ENCODE measurements at regions of chr2 and their contacts with region 1.

Region 1: GRCh38 chr2:42040643-42041278 is 7.1 kb upstream of the PKDCC start:
- DNase-seq: no peak
- ATAC-seq: peak; percentile 80
- H3K4me3 Mint-ChIP-seq: no peak overlapping the region
- H3K27ac Mint-ChIP-seq: no peak overlapping the region
- H3K4me1 Mint-ChIP-seq: peaks cover 39% of the 10 kb centered on the region
- H3K27me3 Mint-ChIP-seq: no peaks in the 10 kb centered on the region
- CTCF ChIP-seq: no peak

Region 2: GRCh38 chr2:41853427-41854216 is 187.1 kb before region 1 on chr2:
- CTCF ChIA-PET with region 1: interaction called, 10 read pairs
- POLR2A ChIA-PET with region 1: no interaction called
- DNase-seq: peak; percentile 70
- ATAC-seq: peak; percentile 77
- H3K4me3 Mint-ChIP-seq: no peak overlapping the region
- H3K27ac Mint-ChIP-seq: no peak overlapping the region
- H3K4me1 Mint-ChIP-seq: peaks cover 6% of the 10 kb centered on the region
- H3K27me3 Mint-ChIP-seq: peaks cover 3% of the 10 kb centered on the region; the same call in 1 of the 2 replicates
- CTCF ChIP-seq: peak; percentile 65

Region 3: GRCh38 chr2:42028571-42029148 is 12.1 kb before region 1 on chr2:
- CTCF ChIA-PET with region 1: interaction called, 19 read pairs
- POLR2A ChIA-PET with region 1: interaction called, 3 read pairs
- DNase-seq: no peak
- ATAC-seq: no peak
- H3K4me3 Mint-ChIP-seq: no peak overlapping the region
- H3K27ac Mint-ChIP-seq: no peak overlapping the region
- H3K4me1 Mint-ChIP-seq: peaks cover 69% of the 10 kb centered on the region
- H3K27me3 Mint-ChIP-seq: peaks cover 34% of the 10 kb centered on the region
- CTCF ChIP-seq: no peak

Region 4: DNA sequence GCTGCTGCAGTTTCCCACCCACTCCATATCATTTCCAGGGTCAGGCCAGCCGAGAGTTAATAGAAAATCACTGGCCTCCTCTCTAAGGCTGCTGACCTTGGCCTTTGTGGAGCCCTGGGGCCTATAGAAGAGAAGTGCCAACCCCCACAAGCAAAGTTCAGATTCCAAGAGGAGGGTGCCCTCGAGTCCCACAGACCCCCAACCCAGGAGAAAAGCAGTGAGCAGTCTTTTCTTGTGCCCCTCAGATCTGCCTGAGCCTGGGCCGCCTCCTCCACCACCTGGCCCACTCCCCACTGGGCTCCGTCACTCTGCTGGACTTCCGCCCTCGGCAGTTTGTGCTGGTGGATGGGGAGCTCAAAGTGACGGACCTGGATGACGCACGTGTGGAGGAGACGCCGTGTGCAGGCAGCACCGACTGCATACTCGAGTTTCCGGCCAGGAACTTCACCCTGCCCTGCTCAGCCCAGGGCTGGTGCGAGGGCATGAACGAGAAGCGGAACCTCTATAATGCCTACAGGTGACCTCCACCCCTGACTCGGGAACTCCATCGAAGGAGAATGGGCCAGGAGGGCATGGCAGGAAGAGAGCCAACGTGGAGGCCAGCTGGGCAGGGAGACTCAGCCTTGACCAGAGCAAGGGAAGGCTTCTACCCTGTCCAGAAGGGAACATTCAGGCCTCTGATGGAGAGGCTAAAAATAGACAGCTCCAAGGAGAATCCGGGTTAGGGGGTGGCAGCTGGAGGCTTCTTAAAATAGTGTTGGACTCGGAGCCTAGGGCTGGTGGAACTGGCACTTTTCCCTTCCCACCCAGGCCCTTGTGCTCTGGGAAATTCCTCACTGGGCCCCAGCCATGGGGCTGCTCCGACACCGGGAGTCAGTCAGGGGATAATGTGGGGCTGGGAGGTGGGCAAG is 13.3 kb after region 1 on chr2:
- CTCF ChIA-PET with region 1: interaction called, 33 read pairs
- POLR2A ChIA-PET with region 1: no interaction called
- DNase-seq: no peak
- ATAC-seq: no peak
- H3K4me3 Mint-ChIP-seq: no peak overlapping the region
- H3K27ac Mint-ChIP-seq: peak overlapping the region; percentile 45; the same call in 1 of the 2 replicates
- H3K4me1 Mint-ChIP-seq: peaks cover 63% of the 10 kb centered on the region
- H3K27me3 Mint-ChIP-seq: peaks cover 14% of the 10 kb centered on the region
- CTCF ChIP-seq: no peak

Region 5: DNA sequence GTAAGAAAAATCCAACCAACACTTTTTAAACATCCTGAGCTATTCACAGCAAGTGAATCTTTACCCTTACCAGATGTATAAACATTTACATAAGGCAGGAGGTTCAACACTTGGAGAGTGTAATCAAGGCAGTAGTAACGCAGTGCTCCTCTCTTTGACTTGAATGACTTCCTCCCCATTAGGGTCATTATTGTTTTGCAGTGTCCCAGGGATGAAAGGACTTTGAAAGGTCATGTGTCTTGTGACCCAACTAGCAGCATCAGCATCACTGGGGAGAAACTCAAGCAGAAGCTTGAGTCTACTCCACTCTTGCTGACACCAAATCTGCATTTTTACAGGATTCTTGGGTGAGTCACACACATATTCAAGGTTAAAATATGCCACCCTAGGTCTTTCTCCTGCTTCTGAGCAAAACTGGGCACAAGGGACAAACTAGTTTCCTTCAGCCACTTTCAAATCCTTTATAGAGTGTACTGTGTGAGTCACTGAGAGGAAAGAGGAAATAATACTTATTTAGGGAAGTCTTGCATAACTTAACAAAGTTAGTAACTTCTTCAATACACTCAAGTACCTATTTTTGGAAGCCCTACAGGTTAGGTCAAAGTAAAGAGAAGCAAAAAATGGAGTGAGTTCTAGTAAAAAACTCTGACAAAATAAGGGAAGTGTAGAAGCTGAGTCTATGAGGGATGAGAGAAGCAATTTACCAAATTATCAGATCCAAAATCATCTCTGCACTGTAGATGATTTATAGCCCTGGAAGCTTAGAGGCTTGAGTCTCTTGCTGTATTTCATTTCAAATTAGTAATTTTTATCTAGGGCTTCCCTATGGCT is 77.4 kb after region 1 on chr2:
- CTCF ChIA-PET with region 1: no interaction called
- POLR2A ChIA-PET with region 1: no interaction called
- DNase-seq: no peak
- ATAC-seq: peak; percentile 56
- H3K4me3 Mint-ChIP-seq: no peak overlapping the region
- H3K27ac Mint-ChIP-seq: peak overlapping the region; percentile 54
- H3K4me1 Mint-ChIP-seq: peaks cover 20% of the 10 kb centered on the region
- H3K27me3 Mint-ChIP-seq: no peaks in the 10 kb centered on the region
- CTCF ChIP-seq: no peak